Activated T-helper 1 cell treated with anti-CD3 and anti-CD28 coated beads, Interleukin-12 subunit alpha, Interleukin-12 subunit beta, Interleukin-2, Interleukin-4 antibody, amounts not matched to agents 30 ng/mL and 10 ng/mL and 1 ng/mL, durations not matched to agents 14 hours and 24 hours and 36 hours (primary cell): ENCODE measurements at regions of chr3 and their contacts with region 1.

Region 1: DNA sequence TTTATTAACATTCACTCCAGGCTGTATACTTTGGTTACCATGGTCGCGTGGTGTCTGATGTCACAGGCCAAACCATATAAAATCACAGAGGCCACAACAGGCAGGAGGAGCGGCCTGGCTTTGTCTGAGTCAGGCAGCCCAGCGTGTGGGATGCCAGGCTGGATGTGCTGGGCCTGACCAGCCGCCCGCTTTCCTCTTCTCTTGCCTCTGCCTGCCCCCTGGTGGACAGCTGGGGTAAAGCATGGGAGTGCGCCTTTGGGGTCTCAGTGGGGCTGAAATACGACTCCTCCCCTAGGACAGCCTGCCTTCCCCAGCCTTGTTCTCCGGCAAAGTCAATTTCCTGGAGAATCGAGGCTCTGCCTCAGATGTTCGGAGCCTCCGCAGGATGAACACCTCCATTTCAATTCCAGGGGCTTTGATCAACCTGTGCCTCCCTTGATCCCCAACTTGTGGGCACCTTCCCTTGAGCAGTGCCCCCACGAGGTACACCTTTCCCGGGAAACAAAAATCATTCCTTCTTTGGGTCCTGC is 78.2 kb downstream of the CCNL1 start:
- DNase-seq: peak; percentile 73
- H3K4me3 Mint-ChIP-seq: no peak overlapping the region
- H3K27ac Mint-ChIP-seq: no peak overlapping the region
- H3K4me1 Mint-ChIP-seq: peaks cover 46% of the 10 kb centered on the region
- H3K27me3 Mint-ChIP-seq: no peaks in the 10 kb centered on the region

Region 2: GRCh38 chr3:156536524-156537231 is 545.1 kb before region 1 on chr3:
- intact Hi-C with region 1: loop called (anchors 1 kb)
- DNase-seq: no peak
- H3K4me3 Mint-ChIP-seq: no peak overlapping the region
- H3K27ac Mint-ChIP-seq: no peak overlapping the region
- H3K4me1 Mint-ChIP-seq: peaks cover 19% of the 10 kb centered on the region
- H3K27me3 Mint-ChIP-seq: no peaks in the 10 kb centered on the region